Activated T-helper 1 cell treated with anti-CD3 and anti-CD28 coated beads, Interleukin-12 subunit alpha, Interleukin-12 subunit beta, Interleukin-2, Interleukin-4 antibody, amounts not matched to agents 30 ng/mL and 10 ng/mL and 1 ng/mL, durations not matched to agents 14 hours and 24 hours and 36 hours (primary cell): ENCODE measurements at regions of chr6 and their contacts with region 1.

Region 1: GRCh38 chr6:125790358-125791150 is at the start of gene NCOA7:
- DNase-seq: peak; percentile 78
- H3K4me3 Mint-ChIP-seq: peak within 1 kb of the TSS; percentile 91
- H3K27ac Mint-ChIP-seq: peak within 1 kb of the TSS; percentile 95
- H3K4me1 Mint-ChIP-seq: peaks cover 50% of the 10 kb centered on the region
- H3K27me3 Mint-ChIP-seq: no peaks in the 10 kb centered on the region
- total RNA-seq, gene NCOA7: 56.1 and 59.3 TPM in 2 replicates

Region 2: DNA sequence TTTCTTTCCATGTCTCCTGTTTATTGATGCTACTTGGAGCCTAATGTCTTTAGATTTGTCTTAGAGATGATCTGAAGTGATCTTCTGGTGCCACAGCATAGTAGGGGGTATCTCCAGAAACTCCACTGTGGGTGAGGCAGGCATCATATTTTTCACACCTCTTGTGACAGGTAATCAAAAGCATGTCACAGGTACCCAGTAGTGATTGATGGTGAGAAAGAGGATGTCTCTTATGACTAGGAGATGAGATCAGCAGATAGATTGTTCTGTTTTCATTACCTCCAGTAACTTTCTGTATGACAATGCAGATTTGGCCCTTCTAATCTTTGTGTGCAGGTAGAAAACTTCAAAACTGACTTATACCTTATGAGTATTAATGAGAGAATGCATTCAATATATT is 13.7 kb after region 1 on chr6:
- intact Hi-C with region 1: loop called (anchors 1 kb)
- DNase-seq: peak; percentile 14
- H3K4me3 Mint-ChIP-seq: peak overlapping the region; percentile 16
- H3K27ac Mint-ChIP-seq: peak overlapping the region; percentile 66
- H3K4me1 Mint-ChIP-seq: peaks cover 76% of the 10 kb centered on the region
- H3K27me3 Mint-ChIP-seq: no peaks in the 10 kb centered on the region

Region 3: DNA sequence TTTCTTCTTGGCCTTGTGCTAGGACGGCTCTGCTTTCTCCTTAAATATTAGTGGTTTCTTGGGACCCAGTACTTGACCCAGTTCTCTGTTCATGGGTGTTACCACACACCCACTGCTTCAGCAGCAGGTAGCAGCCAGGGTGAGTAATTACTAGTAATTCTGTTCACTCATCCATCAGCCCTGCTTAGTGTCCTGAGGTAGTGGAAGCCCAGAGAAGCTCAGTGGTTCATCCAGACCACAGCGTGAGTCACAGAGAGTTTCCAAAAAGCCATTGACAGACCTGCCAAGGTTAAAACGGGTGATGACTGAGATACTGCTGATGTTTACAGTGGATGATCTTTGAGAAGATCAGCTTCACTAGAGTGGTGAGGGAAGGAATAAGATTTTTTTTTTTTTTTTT is 114.3 kb after region 1 on chr6:
- intact Hi-C with region 1: loop called (anchors 1 kb)
- DNase-seq: peak; percentile 42
- H3K4me3 Mint-ChIP-seq: peak overlapping the region; percentile 60
- H3K27ac Mint-ChIP-seq: peak overlapping the region; percentile 93
- H3K4me1 Mint-ChIP-seq: peaks cover 63% of the 10 kb centered on the region
- H3K27me3 Mint-ChIP-seq: no peaks in the 10 kb centered on the region

Region 4: DNA sequence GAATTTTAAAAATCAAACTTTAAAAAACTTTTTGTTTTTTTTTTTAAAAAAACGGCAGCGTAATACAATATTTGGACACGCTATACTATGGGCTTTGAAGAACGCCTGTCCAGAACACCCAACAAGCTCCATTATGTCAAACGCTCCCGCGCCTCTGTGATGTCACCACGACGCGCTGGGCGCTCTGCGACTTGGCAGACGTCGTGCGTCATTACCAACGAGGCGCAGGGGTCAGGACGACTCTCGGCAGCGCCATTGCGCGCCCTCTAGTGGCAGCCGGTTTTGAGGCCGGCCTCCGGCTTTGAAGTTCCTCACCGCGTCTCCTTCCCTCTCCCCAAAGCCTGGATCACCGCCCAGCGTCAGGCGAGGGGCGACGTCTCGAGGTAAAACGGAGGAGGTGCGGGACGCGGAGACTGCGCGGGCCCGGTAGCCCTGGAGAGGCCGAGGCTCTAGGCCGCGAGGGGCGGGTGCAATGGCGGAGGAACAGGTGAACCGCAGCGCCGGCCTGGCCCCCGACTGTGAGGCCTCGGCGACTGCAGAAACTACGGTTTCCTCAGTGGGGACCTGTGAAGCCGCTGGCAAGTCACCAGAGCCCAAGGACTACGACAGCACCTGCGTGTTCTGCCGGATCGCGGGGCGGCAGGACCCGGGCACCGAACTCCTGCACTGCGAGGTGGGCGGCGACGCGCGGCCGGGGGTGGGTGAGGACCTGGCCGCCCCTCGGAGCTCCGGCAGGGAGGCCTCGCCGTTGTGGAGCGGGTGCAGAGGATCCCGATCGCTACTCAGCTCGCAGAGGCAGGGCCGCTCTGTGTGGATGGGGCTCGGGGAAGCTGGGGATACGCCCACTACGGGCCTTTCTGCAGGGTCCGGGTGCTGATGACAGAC is 166.2 kb after region 1 on chr6 and contains the start of gene HINT3:
- intact Hi-C with region 1: loop called (anchors 1 kb)
- DNase-seq: peak; percentile 96
- H3K4me3 Mint-ChIP-seq: no peak within 1 kb of the TSS
- H3K27ac Mint-ChIP-seq: peak within 1 kb of the TSS; percentile 72
- H3K4me1 Mint-ChIP-seq: peaks cover 5% of the 10 kb centered on the region
- H3K27me3 Mint-ChIP-seq: no peaks in the 10 kb centered on the region
- total RNA-seq, gene HINT3: 9.4 and 9.6 TPM in 2 replicates

Region 5: GRCh38 chr6:126339796-126340609 is 549.4 kb after region 1 on chr6 and contains the start of gene CENPW:
- intact Hi-C with region 1: loop called (anchors 5 kb)
- DNase-seq: peak; percentile 92
- H3K4me3 Mint-ChIP-seq: no peak within 1 kb of the TSS
- H3K27ac Mint-ChIP-seq: no peak within 1 kb of the TSS
- H3K4me1 Mint-ChIP-seq: peaks cover 27% of the 10 kb centered on the region
- H3K27me3 Mint-ChIP-seq: no peaks in the 10 kb centered on the region
- total RNA-seq, gene CENPW: 43.4 and 44.2 TPM in 2 replicates